ENCODE measurements at regions of chr2 and their contacts with region 1.

Region 1: DNA sequence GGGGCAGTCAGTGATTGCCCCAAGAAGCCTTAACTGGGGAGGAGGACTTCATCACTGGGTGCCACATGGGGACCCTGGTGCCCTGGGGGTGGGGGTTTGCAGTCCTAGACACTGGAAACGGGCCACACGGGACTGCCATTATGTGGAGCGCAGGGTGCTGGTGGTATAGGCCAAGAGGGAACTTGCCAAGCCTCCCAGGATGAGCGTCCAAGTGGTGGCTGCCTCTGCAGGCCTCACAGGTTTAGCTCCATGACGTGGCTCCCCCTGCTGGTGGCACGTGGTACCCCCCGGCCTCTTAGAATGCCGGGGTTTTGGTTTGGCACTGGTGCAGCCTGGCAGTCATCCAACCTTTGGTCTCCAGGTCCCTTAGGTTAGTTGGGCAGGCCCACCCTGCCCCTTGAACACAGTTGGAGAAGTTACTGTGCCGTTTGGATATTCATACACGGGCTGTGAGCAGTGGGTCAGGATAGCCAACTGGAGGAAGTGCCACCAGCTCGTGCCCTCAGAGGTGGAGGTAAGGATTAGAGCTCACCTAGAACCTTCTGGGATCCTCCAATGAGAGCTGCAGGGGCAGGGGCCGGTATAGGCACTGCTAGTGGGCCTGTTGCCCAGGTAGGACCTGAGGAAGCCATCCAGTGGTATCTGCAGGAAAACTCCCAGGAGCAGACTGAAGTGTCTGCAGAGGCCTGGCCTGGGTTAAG is 5.6 kb downstream of the PTMA start:
- DNase-seq: peak; percentile 88 to 93
- ATAC-seq: peak; percentile 44 to 60
- H3K4me3 ChIP-seq: no peak overlapping the region
- H3K27ac ChIP-seq: peak overlapping the region in 1 of 2 experiments; percentile 73; a peak in 3 of 6 replicates
- H3K4me1 ChIP-seq: peaks cover 55% of the 10 kb centered on the region
- CTCF ChIP-seq: peak; percentile 89
- EP300 ChIP-seq: no peak
- POLR2A ChIP-seq: no peak
- RAD21 ChIP-seq: peak; percentile 50 to 60

Region 2: DNA sequence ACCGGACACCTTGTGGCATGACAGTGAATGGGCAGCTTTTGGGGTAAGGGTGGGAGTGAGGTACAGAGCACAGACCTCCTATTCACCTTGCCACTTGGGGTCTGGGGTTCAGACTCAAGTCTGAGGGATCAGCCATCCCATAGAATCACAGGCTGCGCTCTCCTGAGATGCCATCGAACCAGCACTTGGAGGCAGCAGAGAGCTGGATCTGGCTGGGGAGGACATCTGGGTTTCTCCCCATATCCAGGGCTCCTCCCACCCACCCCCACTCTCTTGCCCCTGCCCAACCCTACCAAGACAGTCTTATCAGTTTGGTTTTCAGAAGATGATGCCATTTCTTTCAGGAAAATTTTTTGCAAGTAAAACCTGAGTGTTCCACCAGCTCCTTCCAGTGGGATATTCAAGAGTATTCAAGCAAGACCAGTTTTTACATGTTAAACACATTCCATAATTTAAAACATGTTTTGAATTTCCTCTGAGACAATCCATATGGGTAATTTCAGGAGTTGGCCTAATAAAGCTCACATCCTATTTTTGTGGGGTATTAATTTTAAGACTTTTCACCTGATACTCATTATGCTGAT is 150.4 kb before region 1 on chr2:
- CTCF ChIA-PET with region 1: interaction called, 26 read pairs
- POLR2A ChIA-PET with region 1: no interaction called
- DNase-seq: peak; percentile 64 to 75
- ATAC-seq: peak; percentile 96 to 98
- H3K4me3 ChIP-seq: no peak overlapping the region
- H3K27ac ChIP-seq: no peak overlapping the region
- H3K4me1 ChIP-seq: no peaks in the 10 kb centered on the region
- CTCF ChIP-seq: peak; percentile 75
- EP300 ChIP-seq: no peak
- POLR2A ChIP-seq: no peak
- RAD21 ChIP-seq: peak; percentile 74 to 77

Region 3: DNA sequence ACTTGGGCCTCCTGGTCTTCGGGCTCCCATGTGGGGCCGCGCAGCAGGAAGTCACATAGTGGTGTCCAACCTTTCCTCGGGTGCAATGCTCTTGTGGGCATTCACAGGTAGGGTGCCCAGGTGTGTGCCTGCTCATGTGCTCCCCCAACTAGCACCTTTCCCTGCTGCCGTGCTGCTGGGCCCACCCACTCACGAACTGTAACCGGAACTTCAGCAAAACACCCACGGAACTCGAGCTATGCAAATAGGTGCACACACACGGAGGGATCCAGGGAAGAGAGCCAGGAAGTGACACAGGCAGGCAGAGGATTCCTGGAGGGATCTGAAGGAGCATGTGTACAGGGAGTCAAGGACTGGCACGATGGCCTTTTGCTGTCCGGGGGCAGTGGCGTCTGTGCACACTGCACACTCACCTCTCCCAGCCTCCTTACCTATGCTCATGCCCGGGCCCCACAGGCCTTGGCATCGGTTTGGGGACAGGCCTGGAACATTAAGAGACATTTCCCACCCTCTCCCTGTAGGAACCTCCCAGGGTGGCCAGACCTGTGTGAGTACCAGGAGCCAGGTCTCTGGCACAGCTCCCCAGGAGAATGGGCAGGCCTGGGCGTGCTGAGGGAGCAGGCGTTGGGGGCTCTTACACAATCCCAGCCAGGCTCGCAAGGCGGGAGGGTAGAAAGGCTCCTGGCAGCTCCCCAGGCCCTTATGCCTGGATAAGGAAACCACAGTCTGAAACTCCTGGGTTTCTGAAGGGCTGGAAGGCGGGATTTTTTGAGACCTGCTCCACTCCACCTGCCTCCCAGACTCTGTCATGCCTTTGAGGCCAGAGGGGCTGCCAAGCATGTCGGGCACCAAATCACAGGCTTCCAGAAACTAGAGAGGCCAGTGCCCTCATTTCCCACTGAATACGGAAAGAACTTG is 12.2 kb before region 1 on chr2:
- CTCF ChIA-PET with region 1: interaction called, 4,158 read pairs
- POLR2A ChIA-PET with region 1: no interaction called
- DNase-seq: no peak
- ATAC-seq: no peak
- H3K4me3 ChIP-seq: no peak overlapping the region
- H3K27ac ChIP-seq: peak overlapping the region in 1 of 2 experiments; percentile 52; a peak in 3 of 6 replicates
- H3K4me1 ChIP-seq: peaks cover 7% of the 10 kb centered on the region
- CTCF ChIP-seq: no peak
- EP300 ChIP-seq: no peak
- POLR2A ChIP-seq: no peak
- RAD21 ChIP-seq: no peak

Region 4: DNA sequence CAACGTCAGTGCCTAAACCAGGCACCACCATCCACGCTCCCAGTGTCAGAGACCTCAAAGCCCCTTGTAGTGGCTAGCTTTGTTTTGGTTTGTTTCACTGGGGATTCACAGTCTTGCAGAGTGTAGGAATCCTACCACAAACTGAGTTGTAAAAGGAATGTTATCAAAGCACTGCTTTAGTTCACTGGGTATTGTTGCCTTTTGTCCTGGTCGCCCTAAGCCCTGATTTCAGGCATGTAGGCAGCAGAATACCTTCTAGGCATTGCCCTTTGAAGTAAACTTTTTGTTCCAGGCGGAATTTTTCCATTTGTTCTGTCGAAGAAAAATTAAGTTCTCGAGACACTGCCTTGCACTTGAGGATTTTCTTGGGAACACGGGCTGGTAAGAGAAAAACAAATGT is 23.9 kb after region 1 on chr2:
- CTCF ChIA-PET with region 1: interaction called, 17 read pairs
- POLR2A ChIA-PET with region 1: no interaction called
- DNase-seq: no peak
- ATAC-seq: no peak
- H3K4me3 ChIP-seq: no peak overlapping the region
- H3K27ac ChIP-seq: no peak overlapping the region
- H3K4me1 ChIP-seq: no peaks in the 10 kb centered on the region
- CTCF ChIP-seq: no peak
- EP300 ChIP-seq: no peak
- POLR2A ChIP-seq: no peak
- RAD21 ChIP-seq: no peak

Region 5: GRCh38 chr2:231780909-231781797 is 67.3 kb after region 1 on chr2 and contains the start of gene PDE6D:
- CTCF ChIA-PET with region 1: interaction called, 12 read pairs
- POLR2A ChIA-PET with region 1: interaction called, 3 read pairs
- DNase-seq: peak; percentile 99
- ATAC-seq: peak; percentile 97 to 98
- H3K4me3 ChIP-seq: peak within 1 kb of the TSS; percentile 68
- H3K27ac ChIP-seq: peak within 1 kb of the TSS; percentile 79 to 88
- H3K4me1 ChIP-seq: peaks cover 20% of the 10 kb centered on the region
- CTCF ChIP-seq: no peak
- EP300 ChIP-seq: no peak
- POLR2A ChIP-seq: peak; percentile 85
- RAD21 ChIP-seq: no peak
- polyA plus RNA-seq, gene PDE6D: 51.3 and 56.0 TPM in 2 replicates